Activated CD4-positive, alpha-beta memory T cell treated with anti-CD3 and anti-CD28 coated beads for 36 hours (primary cell): ENCODE measurements at regions of chr17 and their contacts with region 1.

Region 1: GRCh38 chr17:73192894-73193701 is at the start of gene COG1:
- DNase-seq: peak; percentile 92
- H3K4me3 Mint-ChIP-seq: peak within 1 kb of the TSS; percentile 95
- H3K27ac Mint-ChIP-seq: peak within 1 kb of the TSS; percentile 92
- H3K4me1 Mint-ChIP-seq: peaks cover 25% of the 10 kb centered on the region
- H3K27me3 Mint-ChIP-seq: no peaks in the 10 kb centered on the region
- total RNA-seq, gene COG1: 29.8 to 30.6 TPM

Region 2: DNA sequence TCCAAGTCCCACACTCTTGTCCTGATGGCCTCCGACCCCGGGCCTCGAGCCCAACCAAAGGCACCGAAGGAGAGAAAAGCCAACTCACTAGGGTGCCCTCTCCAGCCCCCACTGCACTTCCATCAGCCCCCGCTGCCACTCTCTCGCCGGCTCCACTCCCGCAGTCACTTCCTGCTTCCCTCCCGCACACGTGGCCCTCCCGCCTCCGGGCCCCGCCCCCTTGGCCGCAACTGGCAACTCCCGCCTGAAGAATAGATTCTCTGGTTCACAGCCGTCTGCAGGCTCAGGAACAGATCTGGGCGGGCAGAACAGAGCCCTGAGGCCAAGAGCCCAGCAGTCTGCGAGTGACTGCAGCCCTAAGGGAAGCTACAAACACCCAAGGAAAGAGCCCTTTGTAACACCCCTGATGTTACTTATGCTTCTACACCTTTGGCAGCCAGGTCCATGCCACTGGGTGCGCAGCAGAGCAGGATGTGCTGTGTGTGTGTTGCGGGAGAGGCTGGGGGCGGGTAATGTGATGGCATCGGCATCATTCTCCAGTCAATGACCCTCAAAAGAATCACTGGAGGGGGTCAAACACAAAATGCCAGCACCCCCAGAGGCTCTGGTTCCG is 100.5 kb before region 1 on chr17 and contains the start of gene SLC39A11:
- CTCF ChIA-PET with region 1: no interaction called
- POLR2A ChIA-PET with region 1: no interaction called
- intact Hi-C with region 1: loop called (anchors 2 kb)
- DNase-seq: peak; percentile 94
- H3K4me3 Mint-ChIP-seq: peak within 1 kb of the TSS; percentile 97
- H3K27ac Mint-ChIP-seq: peak within 1 kb of the TSS; percentile 83
- H3K4me1 Mint-ChIP-seq: peaks cover 27% of the 10 kb centered on the region
- H3K27me3 Mint-ChIP-seq: no peaks in the 10 kb centered on the region
- total RNA-seq, gene SLC39A11: 14.9 to 15.2 TPM

Region 3: DNA sequence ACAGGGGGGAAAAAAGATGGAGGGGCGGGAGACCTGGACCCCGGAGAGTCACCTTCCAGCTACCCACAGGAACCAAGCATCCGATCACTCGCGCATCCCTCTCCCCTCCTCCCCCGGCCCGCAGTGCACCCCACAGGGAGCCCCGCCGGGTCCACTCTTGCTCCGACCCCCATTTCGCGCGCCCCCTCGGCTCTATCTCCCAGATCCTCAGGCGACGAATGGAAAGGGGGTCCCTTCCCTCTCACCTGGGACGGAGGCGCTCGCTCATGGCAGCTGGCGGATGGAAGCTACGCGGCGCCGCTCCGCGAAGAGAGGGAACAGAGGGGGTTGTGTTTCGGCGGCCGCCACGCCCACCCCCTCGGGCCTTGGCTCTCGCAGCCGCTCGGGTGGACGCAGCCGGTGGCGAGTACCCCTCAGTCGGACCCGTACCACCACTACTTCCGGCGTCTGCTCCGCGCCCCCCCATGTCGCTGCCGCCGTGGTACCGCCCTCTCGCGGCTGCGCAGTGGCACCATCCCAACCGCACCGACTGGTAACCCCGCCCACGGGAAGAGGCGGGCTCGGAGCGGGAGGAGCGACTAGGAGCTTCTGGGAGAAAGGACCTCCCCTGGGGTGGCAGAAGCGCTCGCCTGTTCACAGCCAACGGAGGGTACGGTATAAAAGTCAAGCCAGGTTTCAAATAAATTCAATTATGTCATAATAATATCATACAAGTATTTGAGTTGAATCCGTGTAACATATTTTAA is 38.9 kb after region 1 on chr17:
- CTCF ChIA-PET with region 1: interaction called, 21 read pairs
- POLR2A ChIA-PET with region 1: interaction called, 23 read pairs
- intact Hi-C with region 1: loop called (anchors 1 kb)
- DNase-seq: peak; percentile 98
- H3K4me3 Mint-ChIP-seq: peak overlapping the region; percentile 94
- H3K27ac Mint-ChIP-seq: peak overlapping the region; percentile 94
- H3K4me1 Mint-ChIP-seq: peaks cover 50% of the 10 kb centered on the region
- H3K27me3 Mint-ChIP-seq: no peaks in the 10 kb centered on the region

Region 4: DNA sequence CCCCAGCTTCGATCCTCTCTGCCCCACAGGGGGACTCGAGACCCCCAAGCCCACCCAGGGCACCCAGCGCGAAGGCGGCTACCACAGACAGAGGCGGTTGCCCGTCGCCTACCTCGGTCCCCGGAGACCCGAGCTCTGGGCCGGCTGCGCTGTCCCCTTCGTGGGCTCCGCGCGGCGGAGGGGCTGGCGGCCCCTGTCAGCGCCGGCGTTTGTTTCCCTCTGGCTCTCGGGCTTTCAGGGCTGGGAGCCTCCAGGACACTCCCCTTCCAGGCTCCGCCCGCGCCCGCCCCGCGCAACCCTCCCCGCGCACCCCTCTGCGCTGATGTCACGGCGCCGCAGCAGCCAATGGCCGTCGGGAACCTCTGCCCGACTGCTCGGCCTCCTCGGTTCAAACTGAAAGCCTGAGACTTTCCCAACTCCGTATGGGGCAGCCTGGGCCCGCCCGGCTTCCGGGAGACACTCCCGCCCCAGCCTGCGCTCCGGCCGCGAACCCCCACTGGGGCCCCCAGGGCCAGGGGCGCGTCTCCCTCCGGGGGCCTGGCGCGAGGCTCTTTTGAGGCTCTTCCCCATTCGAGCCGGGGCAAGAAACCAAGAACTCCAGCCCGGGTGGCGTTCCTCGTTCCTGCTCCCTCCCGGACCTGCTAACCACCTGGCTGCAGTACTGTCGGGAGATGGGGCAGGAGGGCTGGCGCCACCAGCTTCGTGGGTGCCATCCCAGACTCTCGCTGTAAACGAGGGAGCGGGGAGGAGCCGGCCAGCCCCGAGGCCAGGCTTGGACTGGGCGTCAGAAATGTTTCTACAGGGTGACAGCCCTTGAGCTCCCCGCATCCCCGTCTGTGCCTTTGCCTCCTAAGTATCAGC is 118.9 kb after region 1 on chr17 and contains the start of gene CDC42EP4:
- CTCF ChIA-PET with region 1: interaction called, 8 read pairs
- POLR2A ChIA-PET with region 1: interaction called, 5 read pairs
- intact Hi-C with region 1: loop called (anchors 5 kb)
- DNase-seq: peak; percentile 94
- H3K4me3 Mint-ChIP-seq: peak within 1 kb of the TSS; percentile 81
- H3K27ac Mint-ChIP-seq: no peak within 1 kb of the TSS
- H3K4me1 Mint-ChIP-seq: peaks cover 14% of the 10 kb centered on the region
- H3K27me3 Mint-ChIP-seq: no peaks in the 10 kb centered on the region
- total RNA-seq, gene CDC42EP4: 1.6 to 1.7 TPM